ENCODE measurements at regions of chr5 and their contacts with region 1.

Region 1: DNA sequence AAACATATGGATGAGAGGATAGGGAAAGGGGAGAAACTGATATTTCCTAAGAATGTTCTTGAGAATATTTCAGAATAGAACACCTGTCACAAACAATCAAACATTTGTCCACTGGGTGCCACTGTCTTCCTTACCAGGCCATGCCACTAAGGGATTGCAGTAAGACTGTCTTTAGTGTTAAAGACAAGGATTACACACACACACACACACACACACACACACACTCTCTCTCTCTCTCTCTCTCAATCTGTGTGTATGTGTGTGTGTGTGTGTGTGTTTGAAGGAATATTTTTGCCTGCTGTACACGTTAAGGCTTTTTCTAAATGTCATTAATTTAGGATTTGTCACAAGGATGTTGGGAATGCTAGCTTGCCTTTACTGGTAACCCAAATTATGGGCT is 54.4 kb downstream of the CCDC192 start:
- DNase-seq: peak; percentile 68

Region 2: DNA sequence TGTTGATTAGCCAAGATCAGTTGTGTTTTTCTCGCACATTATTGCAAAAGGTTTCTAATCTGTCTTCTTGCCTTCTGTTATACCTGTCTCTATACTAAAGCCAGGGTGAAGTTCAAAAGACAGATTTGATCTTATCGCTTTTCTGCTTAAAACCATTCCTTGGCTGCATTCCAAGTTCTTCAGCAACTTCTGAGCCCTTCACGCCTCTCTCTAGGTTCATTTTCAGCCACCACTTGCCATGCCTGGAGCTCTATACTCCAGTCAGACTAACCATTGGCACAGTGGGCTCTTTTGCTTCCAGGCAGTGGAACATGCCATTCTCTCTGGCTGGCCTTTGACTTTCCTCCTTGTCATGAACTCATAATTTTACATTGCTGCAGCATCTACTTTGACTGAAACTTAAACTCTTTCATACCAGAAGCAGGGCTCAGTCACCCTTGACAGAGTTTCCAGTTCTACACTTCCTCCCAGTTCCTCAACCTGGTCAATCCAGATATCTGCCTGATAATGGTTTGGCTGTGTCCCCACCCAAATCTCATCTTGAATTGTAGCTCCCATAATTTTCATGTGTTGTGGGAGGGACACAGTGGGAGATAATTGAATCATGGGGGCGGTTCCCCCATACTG is 440.4 kb after region 1 on chr5:
- in situ Hi-C with region 1: loop called (anchors 25 kb)
- DNase-seq: no peak